H1 (cell line): ENCODE measurements at regions of chr5 and their contacts with region 1.

Region 1: DNA sequence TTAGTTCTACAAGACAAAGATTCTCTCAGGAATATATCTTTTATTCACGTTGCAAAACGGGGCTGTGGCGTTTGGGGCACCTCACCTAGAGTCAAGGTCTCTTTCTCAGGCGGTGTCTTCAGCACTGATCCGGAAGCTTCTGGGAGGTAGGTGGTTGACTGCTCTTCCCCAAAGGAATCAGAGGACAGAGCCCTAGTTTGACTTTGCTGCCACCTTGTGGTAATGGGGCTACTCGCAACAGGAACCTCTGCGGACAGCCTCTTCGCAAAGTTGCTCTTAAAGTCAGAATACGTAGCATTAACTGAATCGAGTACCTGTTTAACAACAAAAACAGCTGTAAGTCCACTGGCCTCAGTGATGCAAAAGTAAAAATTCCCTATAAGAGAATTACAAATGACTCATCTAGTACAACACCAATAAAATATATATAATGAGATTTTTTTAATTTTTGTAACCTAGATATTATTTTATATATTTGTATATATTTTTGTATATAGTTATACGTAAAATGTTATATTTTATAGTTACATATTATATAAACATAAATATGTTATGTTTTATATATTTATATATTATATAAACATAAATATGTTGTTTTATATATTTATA is 13.3 kb upstream of the GPX8 start:
- DNase-seq: peak; percentile 80 to 90
- H3K4me3 ChIP-seq: peak overlapping the region in 1 of 4 experiments; percentile 10; a peak in 1 of 8 replicates
- H3K27ac ChIP-seq: no peak overlapping the region
- H3K4me1 ChIP-seq: no peaks in the 10 kb centered on the region
- H3K27me3 ChIP-seq: no peaks in the 10 kb centered on the region
- CTCF ChIP-seq: peak; percentile 74 to 97 (median 92)
- EP300 ChIP-seq: no peak; a peak in 1 of 3 replicates
- POLR2A ChIP-seq: no peak
- RAD21 ChIP-seq: peak; percentile 99 to 100

Region 2: GRCh38 chr5:54915466-54916027 is 231.1 kb before region 1 on chr5:
- CTCF ChIA-PET with region 1: interaction called, 59 read pairs
- POLR2A ChIA-PET with region 1: interaction called, 3 read pairs
- DNase-seq: no peak
- H3K4me3 ChIP-seq: no peak overlapping the region
- H3K27ac ChIP-seq: no peak overlapping the region
- H3K4me1 ChIP-seq: no peaks in the 10 kb centered on the region
- H3K27me3 ChIP-seq: no peaks in the 10 kb centered on the region
- CTCF ChIP-seq: no peak
- EP300 ChIP-seq: no peak
- POLR2A ChIP-seq: no peak
- RAD21 ChIP-seq: no peak

Region 3: GRCh38 chr5:55051357-55051756 is 95.3 kb before region 1 on chr5:
- CTCF ChIA-PET with region 1: no interaction called
- POLR2A ChIA-PET with region 1: no interaction called
- DNase-seq: no peak
- H3K4me3 ChIP-seq: no peak overlapping the region
- H3K27ac ChIP-seq: no peak overlapping the region
- H3K4me1 ChIP-seq: no peaks in the 10 kb centered on the region
- H3K27me3 ChIP-seq: no peaks in the 10 kb centered on the region
- CTCF ChIP-seq: no peak
- EP300 ChIP-seq: no peak
- POLR2A ChIP-seq: no peak
- RAD21 ChIP-seq: no peak

Region 4: GRCh38 chr5:55159763-55160492 is 13.3 kb after region 1 on chr5 and contains the start of gene GPX8:
- CTCF ChIA-PET with region 1: interaction called, 12 read pairs
- POLR2A ChIA-PET with region 1: interaction called, 6 read pairs
- DNase-seq: no peak
- H3K4me3 ChIP-seq: peak within 1 kb of the TSS; percentile 47 to 78 (median 76)
- H3K27ac ChIP-seq: peak within 1 kb of the TSS; percentile 70
- H3K4me1 ChIP-seq: no peaks in the 10 kb centered on the region
- H3K27me3 ChIP-seq: no peaks in the 10 kb centered on the region
- CTCF ChIP-seq: peak in 2 of 3 experiments; percentile 50 to 60; a peak in 3 of 4 replicates
- EP300 ChIP-seq: no peak
- POLR2A ChIP-seq: peak; percentile 69 to 86
- RAD21 ChIP-seq: peak; percentile 85 to 87
- total RNA-seq, gene GPX8: 55.5 and 60.4 TPM in 2 replicates

Region 5: GRCh38 chr5:55254802-55255201 is 108.2 kb after region 1 on chr5:
- CTCF ChIA-PET with region 1: no interaction called
- POLR2A ChIA-PET with region 1: no interaction called
- DNase-seq: no peak
- H3K4me3 ChIP-seq: no peak overlapping the region
- H3K27ac ChIP-seq: no peak overlapping the region
- H3K4me1 ChIP-seq: no peaks in the 10 kb centered on the region
- H3K27me3 ChIP-seq: no peaks in the 10 kb centered on the region
- CTCF ChIP-seq: no peak
- EP300 ChIP-seq: no peak
- POLR2A ChIP-seq: no peak
- RAD21 ChIP-seq: no peak